Kidney (tissue), 22 donors: ENCODE measurements at regions of chr19 and their contacts with region 1.

Region 1: GRCh38 chr19:13774217-13775191 is at the start of gene C19orf53:
- DNase-seq: peak; percentile 92 to 97 (median 95)
- H3K4me3 ChIP-seq: peak within 1 kb of the TSS; percentile 81 to 92 (median 86)
- H3K27ac ChIP-seq: peak within 1 kb of the TSS; percentile 83 to 84
- H3K4me1 ChIP-seq: peaks cover 2 to 12% (median 12%) of the 10 kb centered on the region in 3 donors
- H3K27me3 ChIP-seq: no peaks in the 10 kb centered on the region
- CTCF ChIP-seq: no peak
- total RNA-seq, gene C19orf53: 62.7 TPM

Region 2: GRCh38 chr19:13825489-13826391 is 51.2 kb after region 1 on chr19:
- intact Hi-C with region 1: no loop called
- DNase-seq: peak in 4 of 5 donors; percentile 73 to 87 (median 80)
- H3K4me3 ChIP-seq: no peak overlapping the region
- H3K27ac ChIP-seq: no peak overlapping the region
- H3K4me1 ChIP-seq: no peaks in the 10 kb centered on the region
- H3K27me3 ChIP-seq: no peaks in the 10 kb centered on the region
- CTCF ChIP-seq: no peak

Region 3: GRCh38 chr19:13861732-13862531 is 87.4 kb after region 1 on chr19:
- intact Hi-C with region 1: loop called (anchors 10 kb)
- DNase-seq: peak; percentile 95 to 97 (median 97)
- H3K4me3 ChIP-seq: peak overlapping the region; percentile 48 to 65 (median 60)
- H3K27ac ChIP-seq: peak overlapping the region; percentile 80 to 94
- H3K4me1 ChIP-seq: peaks cover 0 to 18% (median 7%) of the 10 kb centered on the region in 3 donors
- H3K27me3 ChIP-seq: no peaks in the 10 kb centered on the region
- CTCF ChIP-seq: peak; percentile 100